ENCODE measurements at regions of chr7 and their contacts with region 1.

Region 1: DNA sequence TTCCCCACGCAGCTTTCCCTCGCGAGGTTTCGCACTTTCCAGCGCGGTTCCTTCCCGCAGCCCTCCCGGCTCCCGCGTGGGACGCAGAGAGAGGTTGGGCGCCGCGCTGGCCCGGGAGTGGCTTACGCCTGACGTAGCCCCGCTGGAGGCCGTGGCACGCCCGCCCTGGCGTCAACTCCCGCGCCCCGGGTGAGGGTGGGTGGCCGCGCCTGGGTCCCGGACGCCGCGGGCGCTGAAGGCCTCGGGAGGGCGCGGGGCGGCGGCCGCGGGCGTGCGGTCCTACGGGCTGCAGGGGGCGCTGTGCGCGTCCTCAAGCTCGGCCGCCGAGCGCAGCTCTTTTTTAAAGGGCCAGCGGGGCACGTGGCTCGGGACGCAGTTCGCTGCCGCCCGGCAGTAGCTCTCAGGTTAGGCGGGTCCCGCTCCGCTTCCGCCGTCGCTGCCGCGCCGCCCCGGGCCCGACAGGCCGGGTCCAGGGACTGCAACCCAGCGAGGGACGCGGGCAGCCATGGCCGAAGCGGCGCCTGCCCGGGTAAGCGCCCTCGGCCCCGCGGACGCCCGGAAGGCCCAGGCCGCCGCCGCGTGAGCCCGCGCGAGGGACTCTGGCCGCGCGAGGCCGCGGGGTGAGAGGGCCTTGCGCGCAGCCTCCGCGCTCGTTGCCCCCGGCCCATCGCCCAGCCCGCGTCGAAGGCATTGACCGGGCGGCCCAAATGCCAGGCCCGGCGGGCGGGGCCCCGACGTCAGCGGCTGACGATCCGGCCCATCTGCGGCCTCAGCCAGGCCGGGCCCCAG is at the start of gene ZNF783:
- DNase-seq: peak; percentile 77 to 90 (median 83)
- H3K4me3 ChIP-seq: peak within 1 kb of the TSS; percentile 47 to 87 (median 74)
- H3K27ac ChIP-seq: peak within 1 kb of the TSS; percentile 43 to 94 (median 88)
- H3K27me3 ChIP-seq: no peaks in the 10 kb centered on the region
- CTCF ChIP-seq: peak; percentile 47 to 99 (median 82)
- total RNA-seq, gene ZNF783: 15.2 to 39.8 (median 23.8) TPM

Region 2: GRCh38 chr7:149321978-149322541 is 60.0 kb after region 1 on chr7:
- intact Hi-C with region 1: no loop called
- DNase-seq: no peak
- H3K4me3 ChIP-seq: peak overlapping the region in 35 of 59 donors; percentile 1 to 53 (median 26)
- H3K27ac ChIP-seq: no peak overlapping the region
- H3K27me3 ChIP-seq: no peaks in the 10 kb centered on the region
- CTCF ChIP-seq: no peak

Region 3: GRCh38 chr7:149422129-149422913 is 160.3 kb after region 1 on chr7:
- intact Hi-C with region 1: loop called (anchors 5 kb)
- DNase-seq: peak in 2 of 10 donors; percentile 65 to 72
- H3K4me3 ChIP-seq: peak overlapping the region; percentile 29 to 69 (median 57)
- H3K27ac ChIP-seq: peak overlapping the region in 8 of 59 donors; percentile 20 to 68 (median 46)
- H3K27me3 ChIP-seq: no peaks in the 10 kb centered on the region
- CTCF ChIP-seq: peak in 52 of 56 donors; percentile 28 to 75 (median 56)

Measured in dorsolateral prefrontal cortex (tissue), 120 donors.